Activated B cell treated with CpG ODN at 0.5 μM for 24 hours (primary cell): ENCODE measurements at regions of chr6 and their contacts with region 1.

Region 1: DNA sequence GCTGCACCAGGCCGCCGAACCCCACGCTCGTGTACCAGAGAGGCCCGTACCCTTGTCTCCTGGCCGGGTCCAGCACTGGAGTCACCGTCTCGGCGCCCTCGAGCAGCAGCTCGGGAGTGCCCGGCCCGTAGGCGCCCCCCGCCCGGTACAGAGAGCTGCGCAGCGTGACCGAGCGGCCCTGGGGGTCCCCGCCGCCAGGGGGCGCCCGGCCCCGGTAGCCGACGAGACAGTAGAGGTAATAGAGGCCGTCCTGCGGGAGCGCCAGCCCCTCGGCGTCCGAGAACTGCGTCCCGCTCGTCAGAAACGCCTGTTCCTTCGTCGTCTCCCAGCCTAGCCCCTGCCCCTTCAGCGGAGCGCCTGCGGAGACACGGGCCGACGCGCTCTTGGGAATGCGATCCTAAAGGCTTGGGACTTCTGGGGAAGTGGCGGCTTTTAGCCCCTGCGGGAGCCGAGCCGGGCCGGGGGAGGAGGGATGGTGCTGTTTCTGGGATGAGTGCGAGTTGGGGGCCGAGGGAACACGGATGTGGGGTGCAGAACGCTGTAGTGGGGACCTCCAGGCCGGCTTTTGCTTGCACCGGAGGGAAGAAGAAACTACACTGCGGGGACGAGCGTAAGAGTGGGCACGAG is 1.3 kb downstream of the LTB start:
- DNase-seq: peak; percentile 94
- ATAC-seq: peak; percentile 71
- H3K4me3 Mint-ChIP-seq: peak overlapping the region; percentile 99
- H3K27ac Mint-ChIP-seq: peak overlapping the region; percentile 94
- H3K4me1 Mint-ChIP-seq: peaks cover 83% of the 10 kb centered on the region
- H3K27me3 Mint-ChIP-seq: no peaks in the 10 kb centered on the region
- CTCF ChIP-seq: peak; percentile 91

Region 2: GRCh38 chr6:31267651-31268368 is 313.1 kb before region 1 on chr6:
- CTCF ChIA-PET with region 1: no interaction called
- POLR2A ChIA-PET with region 1: no interaction called
- intact Hi-C with region 1: no loop called
- DNase-seq: no peak
- ATAC-seq: no peak
- H3K4me3 Mint-ChIP-seq: peak overlapping the region; percentile 33
- H3K27ac Mint-ChIP-seq: peak overlapping the region; percentile 55
- H3K4me1 Mint-ChIP-seq: peaks cover 51% of the 10 kb centered on the region
- H3K27me3 Mint-ChIP-seq: no peaks in the 10 kb centered on the region
- CTCF ChIP-seq: no peak

Region 3: GRCh38 chr6:31468311-31468710 is 112.6 kb before region 1 on chr6:
- CTCF ChIA-PET with region 1: no interaction called
- POLR2A ChIA-PET with region 1: no interaction called
- intact Hi-C with region 1: no loop called
- DNase-seq: no peak
- ATAC-seq: no peak
- H3K4me3 Mint-ChIP-seq: peak overlapping the region; percentile 3
- H3K27ac Mint-ChIP-seq: no peak overlapping the region
- H3K4me1 Mint-ChIP-seq: peaks cover 95% of the 10 kb centered on the region
- H3K27me3 Mint-ChIP-seq: no peaks in the 10 kb centered on the region
- CTCF ChIP-seq: no peak

Region 4: GRCh38 chr6:31559958-31560696 is 20.8 kb before region 1 on chr6:
- CTCF ChIA-PET with region 1: interaction called, 611 read pairs
- POLR2A ChIA-PET with region 1: interaction called, 1,155 read pairs
- intact Hi-C with region 1: loop called (anchors 1 kb)
- DNase-seq: peak; percentile 52
- ATAC-seq: peak; percentile 67
- H3K4me3 Mint-ChIP-seq: peak overlapping the region; percentile 83
- H3K27ac Mint-ChIP-seq: peak overlapping the region; percentile 94
- H3K4me1 Mint-ChIP-seq: peaks cover 90% of the 10 kb centered on the region
- H3K27me3 Mint-ChIP-seq: no peaks in the 10 kb centered on the region
- CTCF ChIP-seq: no peak

Region 5: GRCh38 chr6:31568537-31568961 is 12.4 kb before region 1 on chr6:
- CTCF ChIA-PET with region 1: interaction called, 611 read pairs
- POLR2A ChIA-PET with region 1: interaction called, 1,155 read pairs
- intact Hi-C with region 1: loop called (anchors 1 kb)
- DNase-seq: peak; percentile 39
- ATAC-seq: peak; percentile 71
- H3K4me3 Mint-ChIP-seq: peak overlapping the region; percentile 45
- H3K27ac Mint-ChIP-seq: peak overlapping the region; percentile 93
- H3K4me1 Mint-ChIP-seq: peaks cover 84% of the 10 kb centered on the region
- H3K27me3 Mint-ChIP-seq: no peaks in the 10 kb centered on the region
- CTCF ChIP-seq: no peak